Cardiac septum (tissue), 1 donor: ENCODE measurements at regions of chr12 and their contacts with region 1.

Region 1: GRCh38 chr12:93502802-93503623 is 35.7 kb downstream of the MRPL42 start:
- DNase-seq: no peak

Region 2: DNA sequence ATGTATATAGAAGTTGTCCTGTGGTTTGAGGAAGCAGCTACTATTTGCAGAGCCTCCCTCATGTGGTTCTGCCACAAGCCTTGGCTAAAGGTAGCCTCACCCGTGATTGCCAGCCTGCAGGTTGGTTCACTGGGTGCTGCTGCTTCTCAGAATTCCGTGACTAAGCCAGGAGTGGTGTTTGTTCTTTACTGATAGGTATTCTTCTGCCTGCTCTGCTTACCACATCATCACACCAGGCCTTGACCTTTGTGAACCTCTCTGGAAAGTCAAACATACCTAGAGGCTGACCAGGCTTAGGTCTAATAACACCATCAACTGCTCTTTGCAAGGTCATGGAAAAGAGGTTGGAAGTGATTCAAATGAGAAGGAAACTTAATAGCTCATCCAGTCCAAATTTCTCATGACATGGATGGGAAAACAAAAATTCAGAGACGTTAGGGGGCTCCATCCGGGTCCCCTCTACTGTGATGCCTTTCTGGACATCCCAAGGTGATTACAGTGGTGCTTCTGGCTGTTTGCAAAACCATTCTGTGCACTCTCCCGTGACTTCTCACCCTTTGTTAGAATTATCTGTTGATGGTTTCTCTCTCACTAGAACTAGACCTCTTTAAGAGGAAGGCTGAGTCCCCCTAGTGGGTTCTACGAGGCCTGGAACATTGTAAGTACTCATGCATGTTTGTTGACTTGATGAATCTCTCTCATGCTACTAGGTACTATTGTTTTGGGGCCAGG is 61.0 kb after region 1 on chr12:
- intact Hi-C with region 1: loop called (anchors 2 kb)
- DNase-seq: no peak

Region 3: DNA sequence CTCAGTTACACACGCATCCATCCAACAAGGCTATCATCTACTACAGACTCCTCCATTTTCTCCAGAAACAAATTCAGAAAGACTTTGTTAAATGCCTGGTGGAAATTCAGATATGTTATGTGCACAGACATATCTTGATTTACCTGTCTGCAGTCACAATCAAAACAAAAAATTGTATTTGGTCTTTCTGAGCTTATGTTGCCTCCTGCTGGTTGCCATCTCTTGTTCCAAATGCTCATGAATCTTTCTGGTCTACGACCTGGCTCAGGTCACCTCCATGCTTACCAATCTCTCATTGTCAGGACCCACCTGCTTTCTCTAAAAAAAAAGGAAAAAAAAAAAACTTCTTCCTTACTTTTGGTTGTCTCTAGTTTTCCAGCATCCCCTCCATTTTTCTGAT is 476.2 kb after region 1 on chr12:
- intact Hi-C with region 1: loop called (anchors 5 kb)
- DNase-seq: no peak